CD4-positive, alpha-beta T cell (primary cell): ENCODE measurements at regions of chr20 and their contacts with region 1.

Region 1: DNA sequence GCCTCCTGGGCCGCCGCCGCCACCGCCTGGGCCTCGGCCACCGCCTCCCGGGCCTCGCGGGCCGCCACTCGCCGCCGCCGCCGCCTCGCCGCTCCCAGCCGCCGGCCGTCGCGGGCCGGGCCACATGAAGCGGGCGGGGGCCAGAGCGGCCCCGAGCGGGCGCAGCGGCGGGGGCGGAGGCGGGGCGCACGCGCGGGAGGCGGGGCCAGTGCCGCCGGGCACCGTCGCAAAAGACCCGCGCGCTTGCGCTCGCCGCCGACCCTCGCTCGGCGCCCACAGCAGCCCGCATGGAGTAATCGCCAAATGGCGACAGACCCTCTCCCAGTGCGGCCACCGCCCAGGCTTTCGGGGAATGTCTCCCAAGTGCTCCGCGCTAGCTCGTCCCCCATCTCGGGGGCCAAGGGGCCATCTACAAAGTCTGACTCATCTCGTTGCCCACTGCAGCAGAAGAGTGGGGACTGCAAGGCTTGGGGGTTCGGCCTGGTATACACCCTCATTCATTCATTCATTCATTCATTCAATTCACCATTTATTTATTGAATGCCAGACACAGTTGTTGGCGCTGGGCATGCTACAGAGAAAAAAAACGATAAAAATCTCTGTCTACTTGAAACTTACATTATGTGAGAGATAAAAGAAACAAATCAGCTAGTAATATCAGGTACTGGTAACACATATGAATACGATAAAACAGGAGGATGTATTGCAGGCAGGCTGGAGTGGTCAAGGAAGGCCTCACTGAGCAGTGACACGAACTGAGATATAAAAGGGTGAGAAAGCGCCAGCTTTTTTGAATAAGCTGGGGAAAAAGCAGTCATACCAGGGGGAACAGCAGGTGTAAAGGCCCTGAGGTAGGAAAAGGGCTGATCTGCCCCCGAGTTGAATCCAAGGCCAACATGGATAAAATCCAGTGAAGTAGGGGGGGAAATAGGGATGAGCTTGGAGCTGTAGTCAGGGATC is at the start of gene B4GALT5:
- DNase-seq: peak; percentile 17 to 84 (median 50)
- ATAC-seq: peak; percentile 79
- H3K4me3 ChIP-seq: peak within 1 kb of the TSS; percentile 89
- H3K4me3 Mint-ChIP-seq: peak within 1 kb of the TSS; percentile 93
- H3K27ac ChIP-seq: peak within 1 kb of the TSS in 1 of 2 donors; percentile 40
- H3K27ac Mint-ChIP-seq: peak within 1 kb of the TSS; percentile 63
- H3K4me1 ChIP-seq: peaks cover 17% of the 10 kb centered on the region
- H3K4me1 Mint-ChIP-seq: peaks cover 35% of the 10 kb centered on the region
- H3K27me3 ChIP-seq: no peaks in the 10 kb centered on the region
- H3K27me3 Mint-ChIP-seq: no peaks in the 10 kb centered on the region
- CTCF ChIP-seq: no peak
- total RNA-seq, gene B4GALT5: 3.1 to 3.2 TPM

Region 2: DNA sequence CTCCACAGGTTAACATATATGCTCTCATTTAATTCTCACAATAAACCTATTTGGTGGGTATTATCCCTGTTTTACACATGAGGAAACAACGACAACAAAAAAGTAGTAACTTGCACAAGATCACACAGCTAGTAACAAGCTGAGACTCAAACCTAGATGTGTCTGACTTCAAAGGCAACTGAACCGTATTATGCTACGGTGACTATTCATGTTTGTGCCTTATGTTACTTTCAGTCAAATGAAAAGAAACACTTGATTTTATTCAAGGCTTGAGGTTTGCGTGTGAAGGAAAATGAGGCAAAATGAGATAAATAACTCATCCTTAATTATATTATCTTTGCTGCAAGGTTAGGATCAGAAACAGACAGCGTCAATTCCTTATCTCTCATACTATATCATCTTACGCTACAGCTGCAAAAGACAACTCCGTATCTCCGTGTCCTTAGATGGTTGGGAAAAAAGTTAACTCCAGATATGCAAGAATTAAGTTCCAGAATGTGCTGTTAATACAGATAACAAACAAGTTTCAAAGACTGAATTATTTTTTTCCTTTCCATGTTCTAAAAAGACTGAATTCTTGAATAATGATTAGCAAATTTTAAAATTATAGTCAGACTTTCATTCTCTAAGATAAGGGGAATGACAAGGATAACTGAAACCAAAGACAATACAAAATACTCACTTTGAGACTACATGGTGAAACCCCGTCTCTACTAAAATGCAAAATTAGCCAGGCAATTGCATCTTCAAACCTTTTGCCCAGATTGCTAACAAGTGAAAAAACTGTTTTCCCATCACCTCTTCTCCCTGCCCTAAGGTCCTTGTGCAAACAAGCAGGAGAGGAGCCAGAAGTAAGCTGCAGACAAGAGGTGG is 553.7 kb before region 1 on chr20:
- CTCF ChIA-PET with region 1: no interaction called
- POLR2A ChIA-PET with region 1: no interaction called
- intact Hi-C with region 1: no loop called
- DNase-seq: no peak
- ATAC-seq: no peak
- H3K4me3 ChIP-seq: no peak overlapping the region
- H3K4me3 Mint-ChIP-seq: peak overlapping the region; percentile 16
- H3K27ac ChIP-seq: no peak overlapping the region
- H3K27ac Mint-ChIP-seq: peak overlapping the region; percentile 73
- H3K4me1 ChIP-seq: peaks cover 6% of the 10 kb centered on the region
- H3K4me1 Mint-ChIP-seq: peaks cover 40% of the 10 kb centered on the region
- H3K27me3 ChIP-seq: no peaks in the 10 kb centered on the region
- H3K27me3 Mint-ChIP-seq: no peaks in the 10 kb centered on the region
- CTCF ChIP-seq: no peak

Region 3: GRCh38 chr20:49669601-49670189 is 44.3 kb before region 1 on chr20:
- CTCF ChIA-PET with region 1: no interaction called
- POLR2A ChIA-PET with region 1: interaction called, 3 read pairs
- intact Hi-C with region 1: loop called in 1 of 2 experiments (anchors 5 kb)
- DNase-seq: peak in 3 of 14 experiments; percentile 55 to 70 (median 62)
- ATAC-seq: peak; percentile 27
- H3K4me3 ChIP-seq: peak overlapping the region; percentile 55
- H3K4me3 Mint-ChIP-seq: peak overlapping the region; percentile 45
- H3K27ac ChIP-seq: peak overlapping the region; percentile 25 to 32
- H3K27ac Mint-ChIP-seq: peak overlapping the region; percentile 68
- H3K4me1 ChIP-seq: peaks cover 25% of the 10 kb centered on the region
- H3K4me1 Mint-ChIP-seq: peaks cover 38% of the 10 kb centered on the region
- H3K27me3 ChIP-seq: no peaks in the 10 kb centered on the region
- H3K27me3 Mint-ChIP-seq: no peaks in the 10 kb centered on the region
- CTCF ChIP-seq: no peak

Region 4: GRCh38 chr20:49936153-49937027 is 222.4 kb after region 1 on chr20 and contains the start of gene RNF114:
- CTCF ChIA-PET with region 1: no interaction called
- POLR2A ChIA-PET with region 1: interaction called, 3 read pairs
- intact Hi-C with region 1: loop called in 1 of 2 experiments (anchors 5 kb)
- DNase-seq: peak; percentile 84 to 97 (median 90)
- ATAC-seq: peak; percentile 96
- H3K4me3 ChIP-seq: peak within 1 kb of the TSS; percentile 97
- H3K4me3 Mint-ChIP-seq: peak within 1 kb of the TSS; percentile 93
- H3K27ac ChIP-seq: peak within 1 kb of the TSS; percentile 81 to 82
- H3K27ac Mint-ChIP-seq: peak within 1 kb of the TSS; percentile 90
- H3K4me1 ChIP-seq: peaks cover 42% of the 10 kb centered on the region
- H3K4me1 Mint-ChIP-seq: peaks cover 51% of the 10 kb centered on the region
- H3K27me3 ChIP-seq: no peaks in the 10 kb centered on the region
- H3K27me3 Mint-ChIP-seq: no peaks in the 10 kb centered on the region
- CTCF ChIP-seq: no peak
- total RNA-seq, gene RNF114: 129 to 132 TPM